Activated CD4-positive, alpha-beta T cell treated with anti-CD3 and anti-CD28 coated beads for 36 hours (primary cell): ENCODE measurements at regions of chr4 and their contacts with region 1.

Region 1: GRCh38 chr4:52712172-52712990 is 38.8 kb downstream of the ERVMER34-1 start:
- DNase-seq: peak; percentile 98
- ATAC-seq: peak; percentile 96
- H3K4me3 Mint-ChIP-seq: peak overlapping the region; percentile 90
- H3K27ac Mint-ChIP-seq: peak overlapping the region; percentile 99
- H3K4me1 Mint-ChIP-seq: peaks cover 43% of the 10 kb centered on the region
- H3K27me3 Mint-ChIP-seq: no peaks in the 10 kb centered on the region

Region 2: DNA sequence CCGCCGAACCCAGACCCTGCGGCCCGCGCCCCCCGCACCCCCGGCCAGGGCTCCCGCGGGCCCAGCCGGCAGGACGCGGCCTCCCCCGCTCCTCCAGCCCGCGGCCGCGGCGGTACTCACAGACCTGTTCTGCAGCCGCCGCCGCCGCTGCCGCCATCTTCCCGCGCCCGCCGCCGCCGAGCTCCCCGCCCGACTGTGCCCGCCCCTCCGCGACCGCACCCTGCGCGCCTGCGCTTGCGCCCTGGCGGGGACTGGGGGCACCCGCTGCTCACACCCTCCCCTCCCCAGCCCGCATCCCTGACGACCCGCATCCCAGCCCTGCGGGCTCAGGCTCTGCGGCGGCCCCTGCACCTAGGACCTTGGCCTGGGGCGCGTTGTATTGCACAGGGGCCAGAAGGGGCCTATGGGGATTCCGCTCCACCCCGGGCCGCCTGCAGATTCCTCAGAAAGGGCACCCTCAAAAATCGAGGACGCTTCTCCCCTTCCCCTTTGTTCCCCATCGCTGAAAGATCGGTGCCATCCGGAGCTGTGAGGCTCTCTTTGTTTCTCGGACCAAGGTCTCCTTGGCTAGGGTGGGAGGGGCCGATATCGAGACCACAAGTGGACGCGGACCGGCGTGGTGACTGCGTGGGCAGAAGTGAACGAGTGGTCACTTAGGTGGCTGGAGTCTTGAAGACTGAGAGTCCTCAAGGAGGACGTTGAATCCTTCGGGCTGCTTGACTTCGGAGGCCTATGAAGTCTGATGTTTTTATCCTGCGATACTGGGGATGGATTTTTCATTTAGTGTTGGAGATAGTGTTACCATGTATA is 674.1 kb before region 1 on chr4 and contains the start of gene SGCB:
- CTCF ChIA-PET with region 1: no interaction called
- POLR2A ChIA-PET with region 1: no interaction called
- intact Hi-C with region 1: loop called in 1 of 2 experiments (anchors 1 kb)
- DNase-seq: peak; percentile 85
- ATAC-seq: peak; percentile 96
- H3K4me3 Mint-ChIP-seq: peak within 1 kb of the TSS; percentile 78
- H3K27ac Mint-ChIP-seq: peak within 1 kb of the TSS; percentile 75
- H3K4me1 Mint-ChIP-seq: peaks cover 26% of the 10 kb centered on the region
- H3K27me3 Mint-ChIP-seq: peaks cover 12% of the 10 kb centered on the region
- total RNA-seq, gene SGCB: 12.0 to 14.1 TPM

Region 3: DNA sequence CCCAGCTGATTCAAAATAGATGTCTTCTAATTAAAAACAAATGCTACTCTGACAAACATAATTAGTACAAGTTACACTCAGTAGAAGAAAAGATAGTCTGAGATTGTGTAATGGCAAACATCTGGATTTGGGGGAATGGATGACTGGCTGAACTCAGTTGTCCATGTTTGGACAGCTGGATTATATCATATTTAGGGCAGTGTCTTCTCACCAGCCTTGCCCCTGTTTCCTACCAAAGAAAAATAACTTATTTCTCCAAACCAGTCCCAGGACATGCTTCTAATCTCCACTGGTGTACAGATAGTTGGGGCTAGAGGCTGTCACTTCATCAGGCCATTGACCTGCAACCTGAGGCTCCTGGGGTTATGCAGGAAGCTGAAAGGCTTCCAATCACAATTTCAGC is 290.6 kb before region 1 on chr4:
- CTCF ChIA-PET with region 1: no interaction called
- POLR2A ChIA-PET with region 1: no interaction called
- intact Hi-C with region 1: no loop called
- DNase-seq: no peak
- ATAC-seq: no peak
- H3K4me3 Mint-ChIP-seq: no peak overlapping the region
- H3K27ac Mint-ChIP-seq: no peak overlapping the region
- H3K4me1 Mint-ChIP-seq: no peaks in the 10 kb centered on the region
- H3K27me3 Mint-ChIP-seq: peaks cover 2% of the 10 kb centered on the region

Region 4: DNA sequence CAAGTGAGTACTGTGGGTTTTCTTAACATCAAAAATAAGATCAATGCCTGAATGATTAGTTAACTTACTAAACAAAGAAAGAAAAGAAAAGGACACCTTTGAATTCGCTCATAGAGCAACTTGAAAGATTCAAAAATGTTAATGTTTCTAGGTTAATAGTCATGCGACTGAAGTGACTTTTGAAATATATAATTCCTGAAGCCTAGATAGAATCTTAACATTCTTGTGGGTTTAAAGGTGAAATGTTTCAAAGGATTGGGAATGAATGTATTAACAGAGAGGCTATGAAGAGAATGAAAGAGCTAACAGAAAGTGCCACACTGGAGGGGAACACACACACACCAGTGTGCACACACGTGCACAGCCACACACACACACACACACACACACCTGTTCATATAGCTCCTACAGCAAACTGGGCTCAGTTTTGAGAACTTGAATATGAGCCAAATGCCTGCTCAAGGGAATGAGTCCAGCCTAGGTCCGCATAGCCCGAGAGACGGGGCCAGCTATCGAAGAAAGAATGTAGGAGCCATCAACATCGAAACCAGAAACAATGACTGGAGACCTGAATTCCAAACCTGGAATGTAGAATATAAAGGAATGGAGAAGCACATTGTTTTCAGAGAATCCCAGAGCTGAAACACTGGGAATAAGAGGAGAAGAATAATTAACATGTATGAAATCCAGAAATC is 76.3 kb after region 1 on chr4:
- CTCF ChIA-PET with region 1: no interaction called
- POLR2A ChIA-PET with region 1: no interaction called
- intact Hi-C with region 1: no loop called
- DNase-seq: no peak
- ATAC-seq: no peak
- H3K4me3 Mint-ChIP-seq: no peak overlapping the region
- H3K27ac Mint-ChIP-seq: no peak overlapping the region
- H3K4me1 Mint-ChIP-seq: no peaks in the 10 kb centered on the region
- H3K27me3 Mint-ChIP-seq: peaks cover 2% of the 10 kb centered on the region

Region 5: GRCh38 chr4:52824603-52825459 is 112.5 kb after region 1 on chr4:
- CTCF ChIA-PET with region 1: no interaction called
- POLR2A ChIA-PET with region 1: interaction called, 3 read pairs
- intact Hi-C with region 1: loop called (anchors 2 kb)
- DNase-seq: no peak
- ATAC-seq: no peak
- H3K4me3 Mint-ChIP-seq: no peak overlapping the region
- H3K27ac Mint-ChIP-seq: peak overlapping the region; percentile 41
- H3K4me1 Mint-ChIP-seq: peaks cover 37% of the 10 kb centered on the region
- H3K27me3 Mint-ChIP-seq: no peaks in the 10 kb centered on the region

Region 6: GRCh38 chr4:52983563-52984303 is 271.4 kb after region 1 on chr4:
- CTCF ChIA-PET with region 1: interaction called, 3 read pairs
- POLR2A ChIA-PET with region 1: no interaction called
- intact Hi-C with region 1: loop called (anchors 2 to 5 kb)
- DNase-seq: no peak
- ATAC-seq: peak; percentile 44
- H3K4me3 Mint-ChIP-seq: no peak overlapping the region
- H3K27ac Mint-ChIP-seq: no peak overlapping the region
- H3K4me1 Mint-ChIP-seq: peaks cover 4% of the 10 kb centered on the region
- H3K27me3 Mint-ChIP-seq: no peaks in the 10 kb centered on the region

Region 7: GRCh38 chr4:53365486-53366300 is 653.3 kb after region 1 on chr4 and contains the start of gene SCFD2:
- CTCF ChIA-PET with region 1: no interaction called
- POLR2A ChIA-PET with region 1: no interaction called
- intact Hi-C with region 1: loop called (anchors 1 to 10 kb)
- DNase-seq: peak; percentile 98
- ATAC-seq: peak; percentile 98
- H3K4me3 Mint-ChIP-seq: peak within 1 kb of the TSS; percentile 95
- H3K27ac Mint-ChIP-seq: peak within 1 kb of the TSS; percentile 95
- H3K4me1 Mint-ChIP-seq: peaks cover 47% of the 10 kb centered on the region
- H3K27me3 Mint-ChIP-seq: peaks cover 5% of the 10 kb centered on the region
- total RNA-seq, gene SCFD2: 21.6 to 22.5 TPM